ENCODE measurements at regions of chr2 and their contacts with region 1.

Region 1: DNA sequence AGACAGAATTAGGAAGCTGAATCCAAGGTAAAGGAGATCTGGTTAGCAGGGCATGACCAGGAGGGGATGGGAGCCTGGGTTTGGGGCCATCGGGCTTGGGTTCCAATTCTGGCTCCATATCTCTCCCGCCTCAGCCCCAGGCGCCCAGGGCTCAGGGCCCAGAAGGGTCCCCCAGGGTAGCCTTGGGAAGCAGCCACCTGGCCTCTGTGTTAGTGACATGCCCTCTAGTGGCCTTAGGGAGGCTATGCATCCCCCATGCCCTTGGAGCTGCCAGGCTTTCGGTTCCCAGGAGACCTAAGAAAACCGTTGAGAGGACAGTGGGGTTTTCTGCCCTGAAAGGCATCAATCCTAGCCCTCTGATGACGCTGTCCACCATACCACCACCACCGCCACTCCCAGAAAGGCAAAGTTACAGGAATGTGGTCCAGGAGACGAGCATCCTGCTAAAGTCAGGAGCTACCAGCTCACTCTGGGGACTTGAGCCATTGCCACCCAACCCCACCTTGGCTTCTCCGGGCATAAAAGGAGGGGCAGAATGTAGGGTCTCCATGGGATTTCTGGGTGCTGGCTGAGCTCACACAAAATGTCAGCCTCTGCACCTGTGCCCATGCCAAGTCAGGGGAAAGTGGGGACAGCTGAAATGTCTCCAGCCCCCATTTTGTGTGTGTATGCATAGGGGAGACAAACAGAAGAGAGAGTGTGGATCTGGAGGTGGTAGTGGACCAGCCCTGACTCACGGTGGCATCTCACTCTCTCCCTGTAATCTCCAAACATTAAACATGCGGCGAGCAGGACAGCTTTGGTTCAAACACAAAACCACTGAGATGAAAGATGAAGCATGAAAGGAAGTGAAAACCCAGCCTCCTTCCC is 56.5 kb downstream of the EMX1 start:
- DNase-seq: peak in 1 of 2 donors; percentile 41
- ATAC-seq: peak; percentile 92

Region 2: DNA sequence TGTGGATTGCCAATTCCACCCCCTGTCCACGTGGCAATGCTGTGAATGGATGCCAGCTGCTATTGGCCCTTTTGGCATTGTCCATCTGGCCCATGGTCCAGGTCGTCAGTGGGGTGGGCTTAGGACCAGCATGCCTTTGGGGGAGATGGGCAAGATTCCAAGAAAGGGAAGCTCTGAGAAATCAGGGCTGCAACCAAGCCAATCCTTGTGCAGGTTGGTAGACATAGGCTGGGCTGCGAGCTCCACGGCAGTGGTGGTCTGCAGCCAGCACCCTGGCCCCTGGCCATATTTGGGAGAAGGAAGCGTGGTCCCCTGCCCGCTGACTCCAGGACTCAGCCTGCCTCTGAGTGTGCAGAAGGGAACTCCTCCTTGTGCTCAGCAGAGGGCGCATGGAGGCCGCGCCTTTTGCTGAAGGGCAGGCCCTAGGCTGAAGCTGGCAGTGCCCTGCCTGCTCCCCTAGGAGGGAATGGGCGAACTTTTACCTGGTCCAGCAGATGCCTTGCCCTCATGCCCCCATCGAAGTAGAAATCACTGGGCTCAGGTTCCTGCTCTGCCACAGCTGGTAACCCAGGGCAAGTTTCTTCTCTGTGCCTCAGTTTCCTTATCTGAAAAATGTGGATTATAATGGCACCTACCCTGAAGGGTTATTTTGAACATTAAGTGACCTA is 81.2 kb before region 1 on chr2:
- intact Hi-C with region 1: loop called in 1 of 2 experiments (anchors 10 kb)
- DNase-seq: peak in 1 of 2 donors; percentile 80
- ATAC-seq: peak; percentile 60

Region 3: DNA sequence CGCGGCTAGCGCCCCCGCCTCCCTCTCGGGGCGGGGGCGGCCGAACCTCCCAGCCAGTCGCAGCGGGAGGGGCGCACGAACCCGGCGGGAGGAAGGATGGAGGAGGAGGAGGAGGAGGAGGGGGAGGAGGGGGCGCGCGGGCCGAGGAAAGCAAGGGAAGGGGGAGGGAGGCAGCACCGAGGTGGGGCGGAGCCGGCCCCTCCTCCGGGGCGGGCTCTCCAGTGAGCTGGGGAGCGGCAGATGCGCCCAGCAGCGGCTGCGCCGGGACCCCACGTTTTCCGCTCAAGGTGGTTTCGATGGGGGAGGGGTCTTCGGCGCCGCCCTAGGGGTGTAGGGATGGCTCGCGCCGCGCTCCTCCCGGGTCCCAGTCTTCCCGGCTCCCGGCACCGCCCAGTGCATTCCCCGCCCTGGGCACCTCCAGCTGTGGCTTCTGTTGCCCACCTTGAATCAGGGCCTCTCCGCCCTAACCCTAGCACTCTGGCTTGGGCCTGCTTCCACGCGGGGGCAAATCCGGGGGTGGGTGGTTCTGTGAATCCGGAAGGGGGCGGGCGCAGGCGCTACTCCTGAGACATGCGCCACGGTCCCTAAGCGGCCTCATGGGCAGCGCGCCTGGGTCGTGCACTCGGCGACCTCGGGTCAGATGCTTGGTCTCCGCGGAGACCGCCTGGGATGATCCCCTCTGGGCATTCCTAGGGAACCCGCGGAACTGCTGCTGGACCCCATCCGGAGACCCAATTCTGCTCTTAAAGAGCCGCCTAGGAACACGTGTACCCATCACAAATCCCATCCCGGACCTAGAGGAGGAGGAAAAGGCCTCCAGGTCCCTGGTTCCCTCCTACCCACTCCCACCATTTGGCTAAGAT is 310.7 kb after region 1 on chr2 and contains the start of gene FBXO41:
- intact Hi-C with region 1: no loop called
- DNase-seq: peak in 1 of 2 donors; percentile 67
- ATAC-seq: peak; percentile 80
- total RNA-seq, gene FBXO41: 2.1 to 2.5 TPM

Measured in left colon (tissue), 2 donors.